ENCODE measurements at regions of chr6 and their contacts with region 1.

Region 1: GRCh38 chr6:129500958-129501918 is 208.7 kb downstream of the ARHGAP18 start:
- DNase-seq: no peak
- ATAC-seq: peak in 1 of 4 donors; percentile 59
- H3K4me3 ChIP-seq: no peak overlapping the region
- H3K27ac ChIP-seq: no peak overlapping the region
- H3K4me1 ChIP-seq: no peaks in the 10 kb centered on the region
- H3K27me3 ChIP-seq: no peaks in the 10 kb centered on the region
- CTCF ChIP-seq: peak in 2 of 4 donors; percentile 0 to 21
- POLR2A ChIP-seq: no peak

Region 2: DNA sequence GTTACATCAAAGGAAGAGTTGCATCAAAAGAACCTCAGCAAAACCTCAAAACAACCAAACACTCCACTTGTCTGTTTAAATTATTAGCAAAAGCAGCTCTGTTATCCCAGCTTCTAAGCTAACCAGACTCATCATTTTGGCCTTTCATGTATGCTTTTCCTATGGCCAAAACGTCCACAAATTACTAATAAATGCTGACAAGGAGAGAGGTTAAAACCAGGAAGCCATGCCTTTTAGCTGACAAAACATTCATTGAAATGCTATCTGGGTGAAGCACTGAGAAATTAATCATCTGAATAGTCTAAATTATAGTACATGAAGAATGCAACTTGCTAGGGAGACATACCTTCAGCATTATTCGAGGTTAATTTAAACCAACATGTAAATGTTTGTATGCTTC is 537.7 kb before region 1 on chr6:
- intact Hi-C with region 1: no loop called
- DNase-seq: no peak
- ATAC-seq: no peak
- H3K4me3 ChIP-seq: no peak overlapping the region
- H3K27ac ChIP-seq: no peak overlapping the region
- H3K4me1 ChIP-seq: no peaks in the 10 kb centered on the region
- H3K27me3 ChIP-seq: no peaks in the 10 kb centered on the region
- CTCF ChIP-seq: no peak
- POLR2A ChIP-seq: no peak

Region 3: GRCh38 chr6:129440691-129441090 is 60.5 kb before region 1 on chr6:
- intact Hi-C with region 1: no loop called
- DNase-seq: no peak
- ATAC-seq: no peak
- H3K4me3 ChIP-seq: no peak overlapping the region
- H3K27ac ChIP-seq: no peak overlapping the region
- H3K4me1 ChIP-seq: no peaks in the 10 kb centered on the region
- H3K27me3 ChIP-seq: no peaks in the 10 kb centered on the region
- CTCF ChIP-seq: no peak
- POLR2A ChIP-seq: no peak

Region 4: DNA sequence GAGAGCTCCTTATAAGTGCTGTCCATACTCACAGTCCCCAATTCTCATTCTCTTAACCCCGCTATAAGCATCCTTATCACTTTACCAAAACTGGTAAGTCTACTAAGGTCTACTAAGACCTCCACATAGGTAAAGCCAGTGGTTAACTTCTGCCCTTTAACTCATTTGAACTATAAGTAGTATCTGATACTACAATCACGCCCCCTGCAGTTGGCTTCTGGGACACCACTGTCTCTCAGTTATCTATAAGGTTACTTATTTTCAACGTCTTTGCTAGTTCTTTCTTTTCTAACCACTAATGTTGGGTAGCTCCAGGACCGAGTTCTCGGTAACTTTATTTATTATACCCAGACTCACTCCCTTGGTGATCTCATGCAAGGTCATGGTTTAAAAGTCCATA is 66.1 kb after region 1 on chr6:
- intact Hi-C with region 1: loop called in 1 of 2 experiments (anchors 10 kb)
- DNase-seq: no peak
- ATAC-seq: peak in 1 of 4 donors; percentile 25
- H3K4me3 ChIP-seq: no peak overlapping the region
- H3K27ac ChIP-seq: no peak overlapping the region
- H3K4me1 ChIP-seq: no peaks in the 10 kb centered on the region
- H3K27me3 ChIP-seq: no peaks in the 10 kb centered on the region
- CTCF ChIP-seq: peak in 3 of 4 donors; percentile 30 to 31 (median 31)
- POLR2A ChIP-seq: no peak

Measured in right lobe of liver (tissue), 6 donors.